Colonic mucosa (tissue), 4 donors: ENCODE measurements at regions of chrX and their contacts with region 1.

Region 1: GRCh38 chrX:103686199-103687072 is at the start of gene MORF4L2:
- DNase-seq: peak; percentile 90
- H3K4me3 ChIP-seq: peak within 1 kb of the TSS; percentile 42
- H3K27ac ChIP-seq: peak within 1 kb of the TSS; percentile 85
- H3K4me1 ChIP-seq: no peaks in the 10 kb centered on the region
- H3K27me3 ChIP-seq: no peaks in the 10 kb centered on the region
- CTCF ChIP-seq: no peak
- total RNA-seq, gene MORF4L2: 198 to 266 TPM

Region 2: GRCh38 chrX:103779141-103779789 is 92.8 kb after region 1 on chrX:
- intact Hi-C with region 1: loop called (anchors 5 kb)
- DNase-seq: no peak
- H3K4me3 ChIP-seq: no peak overlapping the region
- H3K27ac ChIP-seq: no peak overlapping the region
- H3K4me1 ChIP-seq: no peaks in the 10 kb centered on the region
- H3K27me3 ChIP-seq: no peaks in the 10 kb centered on the region
- CTCF ChIP-seq: no peak

Region 3: GRCh38 chrX:103817502-103817901 is 131.1 kb after region 1 on chrX:
- intact Hi-C with region 1: loop called (anchors 5 kb)
- DNase-seq: peak; percentile 41
- H3K4me3 ChIP-seq: no peak overlapping the region
- H3K27ac ChIP-seq: no peak overlapping the region
- H3K4me1 ChIP-seq: no peaks in the 10 kb centered on the region
- H3K27me3 ChIP-seq: no peaks in the 10 kb centered on the region
- CTCF ChIP-seq: peak; percentile 90